Left ventricle myocardium inferior (tissue), 1 donor: ENCODE measurements at regions of chr19 and their contacts with region 1.

Region 1: DNA sequence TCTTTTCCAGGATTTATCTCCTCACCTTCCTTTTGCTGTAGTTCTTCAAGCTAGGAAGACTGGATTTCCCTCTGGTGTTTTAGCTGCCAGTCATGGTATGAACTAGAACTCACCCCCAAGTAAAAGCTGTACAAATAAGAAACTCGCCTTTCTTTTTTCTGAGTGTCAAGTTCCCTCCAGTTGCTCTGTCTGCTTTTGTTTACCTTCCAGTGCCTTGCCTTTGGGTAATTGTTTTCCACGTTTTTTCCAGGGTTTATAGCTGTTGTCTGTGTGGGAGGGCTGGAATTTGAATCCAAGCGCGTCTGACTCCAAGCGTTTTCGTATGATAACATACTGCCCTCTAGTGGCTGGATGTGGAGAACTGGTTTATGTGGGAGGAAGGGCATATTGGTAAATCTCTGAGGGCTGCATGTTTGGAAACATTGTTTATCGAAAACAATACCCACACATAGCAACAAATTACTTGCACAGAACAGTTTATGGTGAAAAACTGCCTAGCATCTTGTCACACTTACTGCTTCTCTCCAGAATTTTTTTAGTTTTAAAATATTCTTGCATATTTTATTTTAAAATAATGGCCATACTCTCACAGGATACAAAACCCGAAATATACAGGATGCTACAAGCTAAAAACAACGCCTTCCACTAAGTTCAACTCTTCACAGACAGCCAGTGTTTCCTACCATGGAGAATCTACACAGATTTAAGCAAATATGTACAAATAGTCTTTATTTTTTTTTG is 19.2 kb downstream of the RCN3 start:
- DNase-seq: no peak
- H3K4me3 ChIP-seq: no peak overlapping the region
- H3K27ac ChIP-seq: no peak overlapping the region
- H3K4me1 ChIP-seq: peaks cover 12% of the 10 kb centered on the region
- H3K27me3 ChIP-seq: no peaks in the 10 kb centered on the region
- CTCF ChIP-seq: peak; percentile 89

Region 2: DNA sequence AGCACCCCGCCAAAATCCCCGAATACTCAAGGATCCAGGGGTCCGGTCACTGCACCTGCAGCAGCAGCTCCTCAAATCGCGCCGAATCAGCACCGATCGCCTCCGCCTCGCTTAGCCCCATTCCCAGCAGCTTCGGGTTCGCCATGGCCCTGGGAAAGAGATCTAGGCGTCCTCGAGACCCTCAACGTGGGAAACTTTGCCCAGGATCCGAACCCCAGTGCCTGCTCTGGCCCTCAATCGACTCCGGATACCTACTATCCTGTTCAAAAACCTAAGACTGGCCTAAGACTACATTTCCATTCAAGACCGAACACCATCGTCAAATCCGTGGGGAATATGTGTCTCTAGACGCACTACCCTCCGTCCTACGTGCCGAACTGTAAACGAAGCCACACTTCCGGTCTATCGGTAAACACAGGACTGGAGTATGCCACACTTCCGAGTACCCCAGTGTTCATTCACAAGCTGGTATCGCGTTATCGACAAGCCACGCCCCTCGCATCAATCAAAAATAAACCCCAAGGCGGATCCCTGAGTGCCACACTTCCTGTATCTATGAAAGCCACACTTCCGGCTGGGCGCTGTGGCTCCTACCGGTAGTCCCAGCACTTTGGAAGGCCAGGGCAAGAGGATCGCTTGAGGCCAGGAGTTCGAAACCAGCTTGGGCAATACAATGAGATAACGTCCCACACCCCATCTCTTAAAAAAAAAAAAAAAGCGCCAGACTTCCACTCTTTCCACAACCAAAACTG is 95.4 kb before region 1 on chr19 and contains the start of gene PIH1D1:
- intact Hi-C with region 1: no loop called
- DNase-seq: peak; percentile 96
- H3K4me3 ChIP-seq: peak within 1 kb of the TSS; percentile 70
- H3K27ac ChIP-seq: peak within 1 kb of the TSS; percentile 99
- H3K4me1 ChIP-seq: peaks cover 46% of the 10 kb centered on the region
- H3K27me3 ChIP-seq: no peaks in the 10 kb centered on the region
- CTCF ChIP-seq: peak; percentile 46
- total RNA-seq, gene PIH1D1: 24.7 TPM

Region 3: DNA sequence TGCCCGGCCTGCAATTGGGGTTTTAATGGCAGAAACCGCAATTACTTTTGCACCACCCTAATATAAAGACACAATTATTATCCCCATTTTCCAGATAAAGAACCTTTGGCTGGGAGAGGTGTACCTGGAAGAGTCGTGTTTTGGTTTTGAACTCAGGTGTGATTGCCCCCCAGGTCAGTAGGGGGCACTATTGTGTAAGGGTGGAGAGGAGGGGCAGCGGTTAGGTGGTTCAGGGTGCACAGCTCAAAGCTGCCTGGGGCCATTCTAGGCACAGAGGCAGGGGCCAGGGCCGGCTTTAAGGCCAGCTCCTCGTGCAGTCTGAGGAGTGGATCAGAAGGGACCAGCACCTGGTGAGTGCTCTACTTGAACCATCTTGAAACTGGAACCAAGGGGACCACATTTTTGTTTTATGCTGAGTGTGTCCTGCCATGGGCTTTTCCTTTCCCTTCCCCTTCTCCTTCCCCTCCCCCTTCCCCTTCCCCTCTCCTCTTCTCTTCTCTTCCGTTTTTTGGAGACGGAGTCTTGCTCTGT is 40.4 kb before region 1 on chr19:
- intact Hi-C with region 1: loop called (anchors 2 kb)
- DNase-seq: peak; percentile 43
- H3K4me3 ChIP-seq: no peak overlapping the region
- H3K27ac ChIP-seq: no peak overlapping the region
- H3K4me1 ChIP-seq: peaks cover 9% of the 10 kb centered on the region
- H3K27me3 ChIP-seq: no peaks in the 10 kb centered on the region
- CTCF ChIP-seq: peak; percentile 73

Region 4: GRCh38 chr19:49614096-49614833 is 67.3 kb after region 1 on chr19:
- intact Hi-C with region 1: no loop called
- DNase-seq: no peak
- H3K4me3 ChIP-seq: no peak overlapping the region
- H3K27ac ChIP-seq: no peak overlapping the region
- H3K4me1 ChIP-seq: peaks cover 27% of the 10 kb centered on the region
- H3K27me3 ChIP-seq: no peaks in the 10 kb centered on the region
- CTCF ChIP-seq: no peak